Heart left ventricle (tissue), 16 donors: ENCODE measurements at regions of chr1 and their contacts with region 1.

Region 1: DNA sequence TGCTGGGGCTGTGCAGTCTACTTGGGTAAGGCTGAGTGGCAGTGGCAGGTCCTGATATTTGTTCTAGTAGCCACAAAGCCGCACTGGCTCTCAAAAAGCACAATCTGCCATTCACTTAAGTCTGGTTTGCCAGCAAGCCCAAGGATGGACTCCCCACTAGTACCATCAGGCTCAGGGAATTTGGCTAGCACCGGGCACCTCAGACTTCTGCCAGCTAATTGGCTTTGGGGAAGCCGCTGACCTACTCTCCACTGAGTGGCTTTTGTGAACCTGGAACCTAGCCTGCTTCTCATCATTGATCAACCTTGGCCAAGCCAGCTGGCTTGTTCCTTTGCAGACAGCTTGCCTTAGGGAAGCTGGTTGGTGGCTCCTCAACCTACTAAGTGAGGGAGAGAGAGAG is 83.1 kb downstream of the ESRRG start:
- DNase-seq: peak in 1 of 5 donors; percentile 35
- ATAC-seq: peak; percentile 51 to 82 (median 60)
- H3K4me3 ChIP-seq: no peak overlapping the region
- H3K27ac ChIP-seq: no peak overlapping the region
- H3K4me1 ChIP-seq: peaks cover 0 to 13% (median 0%) of the 10 kb centered on the region in 12 donors
- H3K27me3 ChIP-seq: no peaks in the 10 kb centered on the region
- CTCF ChIP-seq: no peak
- POLR2A ChIP-seq: no peak

Region 2: GRCh38 chr1:216616425-216616824 is 23.7 kb before region 1 on chr1:
- intact Hi-C with region 1: loop called in 1 of 10 experiments (anchors 2 kb)
- DNase-seq: no peak
- ATAC-seq: peak; percentile 40 to 47 (median 42)
- H3K4me3 ChIP-seq: no peak overlapping the region
- H3K27ac ChIP-seq: peak overlapping the region; percentile 7 to 77 (median 50)
- H3K4me1 ChIP-seq: peaks cover 0 to 15% (median 7%) of the 10 kb centered on the region in 12 donors
- H3K27me3 ChIP-seq: no peaks in the 10 kb centered on the region
- CTCF ChIP-seq: no peak
- POLR2A ChIP-seq: no peak